Left colon (tissue), 2 donors: ENCODE measurements at regions of chr18 and their contacts with region 1.

Region 1: GRCh38 chr18:37659906-37660305 is 94.3 kb upstream of the CELF4 start:
- DNase-seq: no peak
- ATAC-seq: no peak

Region 2: DNA sequence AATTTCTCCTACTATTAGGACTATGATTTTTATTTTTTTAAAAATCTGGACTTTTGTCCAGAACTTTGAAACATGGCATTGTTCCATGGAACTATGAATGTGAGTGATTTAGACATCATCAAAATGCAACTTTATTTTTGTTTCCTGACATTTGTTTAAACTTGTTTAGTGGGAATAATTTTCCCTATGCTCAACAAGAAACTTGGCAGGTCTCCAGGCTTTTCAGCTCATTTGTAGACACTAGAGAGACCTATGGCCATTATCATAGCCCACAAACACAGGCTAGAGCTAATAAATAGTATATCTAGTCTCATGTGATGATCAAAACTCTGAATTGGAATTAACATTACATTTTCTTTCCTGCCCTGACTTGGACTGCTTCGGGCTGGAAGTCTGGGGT is 50.8 kb after region 1 on chr18:
- intact Hi-C with region 1: loop called in 1 of 2 experiments (anchors 10 kb)
- DNase-seq: no peak
- ATAC-seq: no peak